Caco-2 (cell line): ENCODE measurements at regions of chr9 and their contacts with region 1.

Region 1: DNA sequence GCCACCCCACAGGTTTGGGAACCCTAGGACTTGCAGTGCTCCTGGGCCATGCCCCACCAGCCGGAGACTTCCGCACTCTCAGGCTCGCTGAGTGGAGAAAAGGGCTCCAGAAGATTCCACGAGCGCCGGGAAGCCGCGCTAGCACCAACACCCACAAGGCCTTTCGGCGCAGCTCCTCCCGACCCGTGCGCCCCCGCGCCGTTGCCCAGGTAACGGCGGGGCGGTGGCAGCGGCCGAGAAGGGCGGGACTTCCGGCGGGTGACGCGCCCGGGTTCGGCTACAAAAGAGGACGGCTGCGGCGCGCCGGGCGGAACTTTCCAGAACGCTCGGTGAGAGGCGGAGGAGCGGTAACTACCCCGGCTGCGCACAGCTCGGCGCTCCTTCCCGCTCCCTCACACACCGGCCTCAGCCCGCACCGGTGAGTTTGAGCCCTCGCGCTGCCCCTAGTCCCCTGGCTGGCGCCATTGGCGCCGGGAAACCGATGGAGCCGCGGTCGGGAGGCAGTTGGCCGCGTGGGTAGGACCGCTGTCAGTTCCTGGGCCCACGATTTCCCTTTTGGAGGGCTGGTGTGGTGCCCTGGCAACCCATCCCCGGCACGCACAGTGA is at the start of gene DNAJA1:
- DNase-seq: peak; percentile 93 to 97
- H3K4me3 ChIP-seq: peak within 1 kb of the TSS; percentile 100
- H3K4me3 Mint-ChIP-seq: peak within 1 kb of the TSS; percentile 86
- H3K27ac Mint-ChIP-seq: peak within 1 kb of the TSS; percentile 87
- H3K4me1 ChIP-seq: peaks cover 28% of the 10 kb centered on the region
- H3K4me1 Mint-ChIP-seq: peaks cover 20% of the 10 kb centered on the region
- H3K27me3 ChIP-seq: no peaks in the 10 kb centered on the region
- H3K27me3 Mint-ChIP-seq: no peaks in the 10 kb centered on the region
- CTCF ChIP-seq: no peak
- total RNA-seq, gene DNAJA1: 187 and 198 TPM in 2 replicates

Region 2: DNA sequence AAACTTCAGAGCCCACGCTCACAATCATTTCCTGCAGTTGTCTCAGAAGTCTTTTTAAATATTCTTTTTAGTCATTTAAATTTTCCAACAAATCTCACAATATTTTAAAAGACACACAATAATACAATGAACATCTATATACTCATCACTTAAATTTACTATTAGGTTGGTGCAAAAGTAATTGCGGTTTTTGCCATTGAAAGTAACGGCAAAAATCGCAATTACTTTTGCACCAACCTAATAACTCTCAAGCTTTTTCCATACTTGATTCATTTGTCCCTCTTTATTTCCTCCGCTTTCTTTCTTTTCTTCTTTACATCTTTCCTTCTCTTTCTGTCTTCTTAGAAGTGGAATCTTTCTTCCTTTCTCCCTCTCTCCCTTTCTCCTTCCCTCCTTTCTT is 260.9 kb before region 1 on chr9:
- CTCF ChIA-PET with region 1: no interaction called
- POLR2A ChIA-PET with region 1: no interaction called
- intact Hi-C with region 1: no loop called
- DNase-seq: no peak
- H3K4me3 ChIP-seq: no peak overlapping the region
- H3K4me3 Mint-ChIP-seq: no peak overlapping the region
- H3K27ac Mint-ChIP-seq: no peak overlapping the region
- H3K4me1 ChIP-seq: no peaks in the 10 kb centered on the region
- H3K4me1 Mint-ChIP-seq: no peaks in the 10 kb centered on the region
- H3K27me3 ChIP-seq: no peaks in the 10 kb centered on the region
- H3K27me3 Mint-ChIP-seq: peaks cover 12% of the 10 kb centered on the region
- CTCF ChIP-seq: no peak

Region 3: GRCh38 chr9:32918628-32919027 is 106.4 kb before region 1 on chr9:
- CTCF ChIA-PET with region 1: no interaction called
- POLR2A ChIA-PET with region 1: no interaction called
- intact Hi-C with region 1: no loop called
- DNase-seq: no peak
- H3K4me3 ChIP-seq: no peak overlapping the region
- H3K4me3 Mint-ChIP-seq: no peak overlapping the region
- H3K27ac Mint-ChIP-seq: no peak overlapping the region
- H3K4me1 ChIP-seq: no peaks in the 10 kb centered on the region
- H3K4me1 Mint-ChIP-seq: no peaks in the 10 kb centered on the region
- H3K27me3 ChIP-seq: no peaks in the 10 kb centered on the region; the same call in 1 of the 2 replicates
- H3K27me3 Mint-ChIP-seq: peaks cover 2% of the 10 kb centered on the region
- CTCF ChIP-seq: no peak

Region 4: GRCh38 chr9:33012328-33013069 is 12.6 kb before region 1 on chr9:
- CTCF ChIA-PET with region 1: no interaction called
- POLR2A ChIA-PET with region 1: interaction called, 10 read pairs
- intact Hi-C with region 1: no loop called
- DNase-seq: no peak
- H3K4me3 ChIP-seq: no peak overlapping the region
- H3K4me3 Mint-ChIP-seq: no peak overlapping the region
- H3K27ac Mint-ChIP-seq: no peak overlapping the region
- H3K4me1 ChIP-seq: no peaks in the 10 kb centered on the region
- H3K4me1 Mint-ChIP-seq: no peaks in the 10 kb centered on the region
- H3K27me3 ChIP-seq: no peaks in the 10 kb centered on the region
- H3K27me3 Mint-ChIP-seq: no peaks in the 10 kb centered on the region
- CTCF ChIP-seq: no peak

Region 5: GRCh38 chr9:33044127-33044673 is 19.1 kb after region 1 on chr9:
- CTCF ChIA-PET with region 1: interaction called, 3 read pairs
- POLR2A ChIA-PET with region 1: interaction called, 11 read pairs
- intact Hi-C with region 1: loop called (anchors 2 kb)
- DNase-seq: peak; percentile 77 to 84
- H3K4me3 ChIP-seq: peak overlapping the region; percentile 56
- H3K4me3 Mint-ChIP-seq: peak overlapping the region; percentile 79
- H3K27ac Mint-ChIP-seq: peak overlapping the region; percentile 45
- H3K4me1 ChIP-seq: peaks cover 4% of the 10 kb centered on the region; the same call in 1 of the 2 replicates
- H3K4me1 Mint-ChIP-seq: peaks cover 6% of the 10 kb centered on the region
- H3K27me3 ChIP-seq: no peaks in the 10 kb centered on the region
- H3K27me3 Mint-ChIP-seq: no peaks in the 10 kb centered on the region
- CTCF ChIP-seq: no peak